PC-9 (cell line): ENCODE measurements at regions of chr12 and their contacts with region 1.

Region 1: DNA sequence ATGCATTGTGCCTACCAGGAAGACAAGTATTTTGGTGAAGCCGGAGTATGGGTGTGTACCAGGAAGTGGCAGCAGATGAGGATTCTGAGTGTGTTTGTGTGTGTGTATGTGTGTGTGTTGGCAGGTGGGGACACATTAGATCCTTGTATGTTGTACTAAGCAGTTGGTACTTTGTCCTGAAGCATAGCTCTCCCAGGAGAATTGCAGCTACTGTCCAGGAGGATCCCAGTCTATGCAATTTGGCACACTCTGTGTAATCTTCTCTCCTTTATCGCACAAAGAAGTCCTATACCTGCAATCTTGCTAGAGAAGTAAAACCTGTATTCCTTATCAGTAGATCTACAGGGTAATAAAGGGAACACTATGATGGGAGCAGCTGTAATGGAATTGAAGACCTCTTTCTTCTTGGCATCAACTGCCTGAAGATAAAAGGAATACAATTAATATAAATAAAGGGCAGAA is 276.5 kb downstream of the PAWR start:
- DNase-seq: peak; percentile 25 to 77
- H3K4me3 ChIP-seq: peak overlapping the region; percentile 26; the same call in 1 of the 2 replicates
- H3K27ac ChIP-seq: peak overlapping the region; percentile 46
- H3K4me1 ChIP-seq: peaks cover 34% of the 10 kb centered on the region
- H3K27me3 ChIP-seq: no peaks in the 10 kb centered on the region
- CTCF ChIP-seq: no peak

Region 2: GRCh38 chr12:79317179-79317847 is 97.0 kb before region 1 on chr12:
- CTCF ChIA-PET with region 1: no interaction called
- POLR2A ChIA-PET with region 1: interaction called, 33 read pairs
- intact Hi-C with region 1: no loop called
- DNase-seq: no peak
- H3K4me3 ChIP-seq: no peak overlapping the region
- H3K27ac ChIP-seq: no peak overlapping the region
- H3K4me1 ChIP-seq: no peaks in the 10 kb centered on the region
- H3K27me3 ChIP-seq: no peaks in the 10 kb centered on the region
- CTCF ChIP-seq: no peak

Region 3: DNA sequence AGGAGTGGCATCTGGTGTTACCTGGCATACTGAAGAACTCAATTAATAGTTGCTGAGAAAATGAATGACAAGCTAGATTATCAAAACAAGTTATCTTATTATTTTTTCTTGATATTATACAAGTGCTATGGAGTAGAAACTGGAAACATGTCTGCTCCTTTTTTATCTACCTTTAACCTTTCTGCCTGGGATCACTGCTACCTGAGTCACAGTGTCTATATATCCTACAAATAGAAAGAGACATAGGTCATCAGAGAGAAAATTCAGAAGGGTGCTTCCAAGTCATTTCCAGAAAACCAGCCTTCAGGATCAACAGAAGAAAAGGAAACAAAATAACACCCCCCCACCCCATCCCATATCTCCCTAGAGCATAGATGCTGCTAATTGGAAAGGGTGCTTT is 113.8 kb after region 1 on chr12:
- CTCF ChIA-PET with region 1: interaction called, 18 read pairs
- POLR2A ChIA-PET with region 1: interaction called, 5 read pairs
- intact Hi-C with region 1: no loop called
- DNase-seq: no peak
- H3K4me3 ChIP-seq: no peak overlapping the region
- H3K27ac ChIP-seq: no peak overlapping the region
- H3K4me1 ChIP-seq: peaks cover 8% of the 10 kb centered on the region
- H3K27me3 ChIP-seq: no peaks in the 10 kb centered on the region
- CTCF ChIP-seq: no peak